ENCODE measurements at regions of chr3 and their contacts with region 1.

Region 1: GRCh38 chr3:3509665-3510280 is 289.5 kb upstream of the LRRN1 start:
- DNase-seq: no peak
- ATAC-seq: no peak
- H3K4me3 ChIP-seq: no peak overlapping the region
- H3K27ac ChIP-seq: no peak overlapping the region
- H3K4me1 ChIP-seq: no peaks in the 10 kb centered on the region
- H3K27me3 ChIP-seq: no peaks in the 10 kb centered on the region
- CTCF ChIP-seq: no peak

Region 2: DNA sequence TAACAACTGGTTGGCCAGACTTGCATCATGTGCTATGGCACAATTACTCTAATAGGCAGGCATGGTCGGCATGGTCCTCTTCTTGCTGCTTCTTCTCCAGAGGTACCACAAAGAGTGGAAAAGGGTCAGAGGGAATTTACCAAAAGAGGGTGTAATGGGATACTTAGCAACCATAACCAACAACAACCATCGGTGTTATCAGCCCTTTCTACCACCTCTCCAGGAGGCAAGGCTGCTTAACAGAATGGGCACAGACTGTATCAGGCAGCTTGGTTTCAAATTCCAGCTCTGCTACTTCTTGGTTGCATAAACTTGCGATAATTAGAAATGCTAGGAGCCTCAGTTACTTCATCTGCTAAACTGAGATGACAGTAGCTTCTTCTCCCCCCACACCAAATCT is 45.6 kb before region 1 on chr3:
- intact Hi-C with region 1: loop called in 1 of 10 experiments (anchors 2 kb)
- DNase-seq: no peak
- ATAC-seq: no peak
- H3K4me3 ChIP-seq: no peak overlapping the region
- H3K27ac ChIP-seq: no peak overlapping the region
- H3K4me1 ChIP-seq: no peaks in the 10 kb centered on the region
- H3K27me3 ChIP-seq: no peaks in the 10 kb centered on the region
- CTCF ChIP-seq: no peak